ENCODE measurements at regions of chr20 and their contacts with region 1.

Region 1: DNA sequence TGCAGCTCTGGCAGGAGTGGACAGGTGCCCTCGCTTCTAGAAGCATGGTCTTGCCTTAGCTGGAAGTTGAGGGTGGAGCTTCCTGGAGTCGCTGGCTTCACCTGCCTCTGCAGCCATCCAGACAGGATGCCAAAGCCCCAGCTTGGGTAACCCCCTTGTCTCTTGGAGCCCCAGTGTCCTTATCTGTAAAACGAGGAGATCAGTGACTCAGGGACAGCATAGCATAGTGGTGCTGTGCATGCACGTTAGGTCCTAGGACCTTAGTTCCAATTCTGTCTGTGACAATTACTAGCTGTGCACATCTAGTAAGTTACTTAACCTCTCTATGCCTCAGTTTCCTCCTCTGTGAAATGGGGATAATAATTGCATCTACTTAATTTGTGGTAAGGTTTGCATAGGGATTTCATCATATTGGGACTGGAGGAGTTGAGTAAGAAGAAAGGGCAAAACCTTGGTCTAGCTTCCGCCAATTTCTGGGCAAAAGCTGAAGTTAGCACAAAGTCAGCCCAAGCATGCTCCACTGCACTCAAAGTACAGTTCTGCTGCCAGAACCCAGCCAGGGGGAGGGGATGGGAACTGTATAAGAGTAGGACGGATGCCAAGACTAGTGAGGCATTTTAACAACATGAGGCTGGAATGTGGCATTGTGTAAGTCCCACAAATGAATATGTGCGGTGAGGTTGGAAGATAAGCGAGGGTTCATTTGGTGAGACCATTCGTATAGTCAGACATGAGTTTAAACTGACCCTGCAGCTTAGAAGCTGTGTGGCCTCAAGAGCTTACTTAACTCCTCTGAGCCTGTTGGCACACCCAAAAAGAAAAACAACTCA is 24.5 kb downstream of the TOX2 start:
- DNase-seq: peak; percentile 36 to 63
- ATAC-seq: peak in 1 of 4 donors; percentile 53
- H3K4me3 ChIP-seq: no peak overlapping the region
- H3K27ac ChIP-seq: no peak overlapping the region
- H3K4me1 ChIP-seq: no peaks in the 10 kb centered on the region
- H3K27me3 ChIP-seq: peaks cover 0 to 6% (median 3%) of the 10 kb centered on the region in 3 donors
- CTCF ChIP-seq: no peak

Region 2: DNA sequence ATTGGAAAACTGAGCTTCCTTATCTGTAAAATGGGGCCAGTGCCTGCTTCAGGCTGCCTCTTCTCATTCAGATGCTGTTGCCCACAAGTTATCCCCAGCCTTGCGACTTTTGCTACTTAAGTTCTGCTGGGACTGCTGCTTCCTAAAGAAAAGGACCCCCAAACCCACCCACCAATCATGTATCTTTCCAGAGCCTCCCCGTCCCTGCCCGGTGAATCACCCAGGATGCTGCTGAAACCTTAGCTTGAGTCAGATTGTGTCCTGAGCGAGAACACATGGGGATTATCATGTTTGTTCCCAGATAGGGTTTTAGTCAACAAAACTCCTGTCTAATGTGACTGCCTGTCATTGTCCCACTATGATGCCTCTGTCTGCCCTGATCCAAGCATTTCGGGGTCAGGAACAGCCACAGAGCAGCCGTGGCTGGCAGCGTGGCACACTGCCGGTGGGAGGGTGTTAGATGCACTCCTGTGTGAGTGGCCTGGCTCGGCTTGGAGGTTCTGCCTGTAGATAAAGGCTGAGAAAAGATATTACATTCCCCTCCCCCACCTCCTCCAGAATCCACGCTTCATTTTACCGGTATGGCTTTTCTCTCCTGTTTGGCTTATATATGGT is 55.4 kb after region 1 on chr20:
- intact Hi-C with region 1: loop called in 1 of 2 experiments (anchors 10 kb)
- DNase-seq: no peak
- ATAC-seq: no peak
- H3K4me3 ChIP-seq: no peak overlapping the region
- H3K27ac ChIP-seq: no peak overlapping the region
- H3K4me1 ChIP-seq: no peaks in the 10 kb centered on the region
- H3K27me3 ChIP-seq: peaks cover 0 to 3% (median 2%) of the 10 kb centered on the region in 3 donors
- CTCF ChIP-seq: no peak

Region 3: GRCh38 chr20:44166477-44166876 is 227.3 kb after region 1 on chr20:
- intact Hi-C with region 1: no loop called
- DNase-seq: peak; percentile 64 to 84
- ATAC-seq: peak; percentile 90 to 95 (median 92)
- H3K4me3 ChIP-seq: peak overlapping the region; percentile 38
- H3K27ac ChIP-seq: peak overlapping the region; percentile 97
- H3K4me1 ChIP-seq: peaks cover 58% of the 10 kb centered on the region
- H3K27me3 ChIP-seq: no peaks in the 10 kb centered on the region
- CTCF ChIP-seq: no peak